MCF 10A (cell line): ENCODE measurements at regions of chr7 and their contacts with region 1.

Region 1: GRCh38 chr7:43869006-43869866 is at the start of gene MRPS24:
- DNase-seq: peak; percentile 93
- H3K4me3 Mint-ChIP-seq: peak within 1 kb of the TSS; percentile 91
- H3K27ac Mint-ChIP-seq: peak within 1 kb of the TSS; percentile 99
- H3K4me1 Mint-ChIP-seq: peaks cover 35% of the 10 kb centered on the region
- H3K27me3 Mint-ChIP-seq: no peaks in the 10 kb centered on the region
- CTCF ChIP-seq: no peak
- total RNA-seq, gene MRPS24: 176 and 188 TPM in 2 replicates

Region 2: GRCh38 chr7:43906331-43907010 is 37.2 kb after region 1 on chr7 and contains the start of gene URGCP:
- CTCF ChIA-PET with region 1: no interaction called
- POLR2A ChIA-PET with region 1: interaction called, 29 read pairs
- intact Hi-C with region 1: loop called (anchors 1 kb)
- DNase-seq: peak; percentile 40
- H3K4me3 Mint-ChIP-seq: peak within 1 kb of the TSS; percentile 84
- H3K27ac Mint-ChIP-seq: peak within 1 kb of the TSS; percentile 94
- H3K4me1 Mint-ChIP-seq: peaks cover 33% of the 10 kb centered on the region
- H3K27me3 Mint-ChIP-seq: no peaks in the 10 kb centered on the region
- CTCF ChIP-seq: no peak
- total RNA-seq, gene URGCP: 37.2 and 51.1 TPM in 2 replicates

Region 3: DNA sequence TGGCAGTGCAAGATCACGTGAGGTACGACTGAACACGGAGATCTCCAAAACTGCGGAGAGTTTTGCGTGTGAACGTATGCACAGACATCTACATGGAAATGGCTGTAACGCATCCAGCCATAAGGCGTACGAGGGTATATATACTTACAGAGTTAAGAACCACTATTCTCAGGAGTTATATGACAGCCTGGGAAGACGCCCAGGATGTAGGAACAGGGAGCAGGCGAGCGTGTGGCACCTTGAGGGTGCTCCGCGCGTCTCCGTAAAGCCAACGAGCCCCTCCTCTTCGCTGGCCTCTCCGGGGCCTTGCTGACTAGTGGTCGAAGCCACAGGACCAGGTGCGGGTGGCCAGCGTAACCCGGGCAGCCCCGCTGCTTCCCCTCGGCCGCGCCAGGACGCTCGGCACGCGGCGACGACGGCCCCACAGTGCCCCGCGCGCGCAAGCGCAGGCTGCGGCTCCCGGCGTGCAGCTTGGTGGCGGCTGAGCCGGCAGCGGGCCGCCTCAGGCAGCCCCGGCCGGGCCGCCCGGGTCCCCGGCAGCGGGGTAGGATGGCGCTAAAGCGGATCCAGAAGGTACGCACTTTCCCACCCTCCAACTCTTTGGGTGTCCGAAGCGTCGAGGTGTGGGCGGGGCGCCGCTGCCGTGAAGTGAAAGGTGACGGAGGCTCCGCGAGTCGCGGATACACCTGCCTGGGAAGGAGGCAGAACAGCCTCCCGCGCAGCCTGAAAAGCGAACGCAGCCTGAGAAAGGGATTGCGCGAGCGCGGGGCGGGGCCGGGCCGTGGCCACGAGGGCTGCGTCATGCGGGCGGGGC is 57.0 kb after region 1 on chr7 and contains the start of gene UBE2D4:
- CTCF ChIA-PET with region 1: interaction called, 3 read pairs
- POLR2A ChIA-PET with region 1: interaction called, 11 read pairs
- intact Hi-C with region 1: loop called (anchors 1 kb)
- DNase-seq: peak; percentile 85
- H3K4me3 Mint-ChIP-seq: peak within 1 kb of the TSS; percentile 88
- H3K27ac Mint-ChIP-seq: peak within 1 kb of the TSS; percentile 81
- H3K4me1 Mint-ChIP-seq: peaks cover 16% of the 10 kb centered on the region
- H3K27me3 Mint-ChIP-seq: no peaks in the 10 kb centered on the region
- CTCF ChIP-seq: no peak
- total RNA-seq, gene UBE2D4: 11.6 and 13.7 TPM in 2 replicates